PC-3 (cell line): ENCODE measurements at regions of chr12 and their contacts with region 1.

Region 1: GRCh38 chr12:96399919-96400797 is at the start of gene CDK17:
- DNase-seq: peak; percentile 77
- ATAC-seq: peak; percentile 65
- H3K4me3 ChIP-seq: peak within 1 kb of the TSS; percentile 82
- H3K27ac ChIP-seq: peak within 1 kb of the TSS; percentile 90
- H3K4me1 ChIP-seq: peaks cover 27% of the 10 kb centered on the region
- H3K27me3 ChIP-seq: no peaks in the 10 kb centered on the region
- CTCF ChIP-seq: 0 out of 2 replicates have a peak, but pooled peaks have one; percentile 16
- total RNA-seq, gene CDK17: 20.7 and 23.9 TPM in 2 replicates

Region 2: GRCh38 chr12:96219698-96220206 is 180.4 kb before region 1 on chr12:
- CTCF ChIA-PET with region 1: interaction called, 8 read pairs
- POLR2A ChIA-PET with region 1: no interaction called
- intact Hi-C with region 1: loop called (anchors 2 kb)
- DNase-seq: peak; percentile 99
- ATAC-seq: peak; percentile 98
- H3K4me3 ChIP-seq: peak overlapping the region; percentile 60
- H3K27ac ChIP-seq: peak overlapping the region; percentile 98
- H3K4me1 ChIP-seq: peaks cover 37% of the 10 kb centered on the region
- H3K27me3 ChIP-seq: no peaks in the 10 kb centered on the region
- CTCF ChIP-seq: no peak

Region 3: GRCh38 chr12:96303653-96304052 is 96.5 kb before region 1 on chr12:
- CTCF ChIA-PET with region 1: interaction called, 15 read pairs
- POLR2A ChIA-PET with region 1: no interaction called
- intact Hi-C with region 1: loop called (anchors 1 kb)
- DNase-seq: no peak
- ATAC-seq: no peak
- H3K4me3 ChIP-seq: no peak overlapping the region
- H3K27ac ChIP-seq: no peak overlapping the region
- H3K4me1 ChIP-seq: peaks cover 9% of the 10 kb centered on the region
- H3K27me3 ChIP-seq: no peaks in the 10 kb centered on the region
- CTCF ChIP-seq: no peak

Region 4: GRCh38 chr12:96347130-96347699 is 52.9 kb before region 1 on chr12:
- CTCF ChIA-PET with region 1: no interaction called
- POLR2A ChIA-PET with region 1: no interaction called
- intact Hi-C with region 1: loop called (anchors 5 kb)
- DNase-seq: no peak
- ATAC-seq: no peak
- H3K4me3 ChIP-seq: no peak overlapping the region
- H3K27ac ChIP-seq: no peak overlapping the region
- H3K4me1 ChIP-seq: no peaks in the 10 kb centered on the region
- H3K27me3 ChIP-seq: no peaks in the 10 kb centered on the region
- CTCF ChIP-seq: no peak

Region 5: DNA sequence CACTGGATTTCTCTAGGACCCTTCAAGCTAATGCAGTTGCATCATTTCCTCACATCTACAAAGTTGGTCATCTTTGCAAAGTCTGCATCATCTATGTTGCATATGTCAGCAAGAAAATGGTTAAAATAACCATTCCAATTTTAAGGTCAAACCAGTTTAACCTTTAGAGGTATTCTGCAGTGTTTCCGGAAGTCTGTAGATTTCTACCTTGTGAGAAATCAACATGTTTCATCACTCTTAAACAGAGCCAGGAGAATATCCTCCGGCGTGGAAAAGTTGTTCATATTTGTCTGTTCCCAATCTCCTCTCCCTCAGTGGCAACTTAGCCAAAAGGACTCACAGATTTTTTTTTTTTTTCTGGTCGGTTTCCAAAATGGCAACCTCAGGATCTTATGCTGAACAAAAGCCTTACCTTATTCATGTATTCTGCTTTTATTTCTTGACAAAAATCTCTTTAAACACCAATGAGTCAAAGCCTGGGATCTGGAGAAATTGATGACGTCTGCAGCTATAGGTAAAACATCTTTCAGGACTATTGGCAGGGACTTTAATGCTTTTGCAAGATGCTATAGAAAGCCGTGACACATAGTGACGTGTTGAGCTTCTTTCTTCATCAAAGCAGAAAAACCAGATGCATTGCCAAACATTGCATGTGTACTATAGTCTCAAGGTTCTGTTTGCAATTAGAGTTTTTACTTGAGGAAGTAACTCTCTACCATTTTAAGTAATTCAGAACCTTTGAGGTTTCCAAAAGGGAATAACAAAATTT is 16.1 kb after region 1 on chr12:
- CTCF ChIA-PET with region 1: no interaction called
- POLR2A ChIA-PET with region 1: no interaction called
- intact Hi-C with region 1: no loop called
- DNase-seq: peak; percentile 96
- ATAC-seq: peak; percentile 84
- H3K4me3 ChIP-seq: peak overlapping the region; percentile 21; the same call in 1 of the 2 replicates
- H3K27ac ChIP-seq: peak overlapping the region; percentile 86
- H3K4me1 ChIP-seq: peaks cover 22% of the 10 kb centered on the region
- H3K27me3 ChIP-seq: no peaks in the 10 kb centered on the region
- CTCF ChIP-seq: no peak

Region 6: DNA sequence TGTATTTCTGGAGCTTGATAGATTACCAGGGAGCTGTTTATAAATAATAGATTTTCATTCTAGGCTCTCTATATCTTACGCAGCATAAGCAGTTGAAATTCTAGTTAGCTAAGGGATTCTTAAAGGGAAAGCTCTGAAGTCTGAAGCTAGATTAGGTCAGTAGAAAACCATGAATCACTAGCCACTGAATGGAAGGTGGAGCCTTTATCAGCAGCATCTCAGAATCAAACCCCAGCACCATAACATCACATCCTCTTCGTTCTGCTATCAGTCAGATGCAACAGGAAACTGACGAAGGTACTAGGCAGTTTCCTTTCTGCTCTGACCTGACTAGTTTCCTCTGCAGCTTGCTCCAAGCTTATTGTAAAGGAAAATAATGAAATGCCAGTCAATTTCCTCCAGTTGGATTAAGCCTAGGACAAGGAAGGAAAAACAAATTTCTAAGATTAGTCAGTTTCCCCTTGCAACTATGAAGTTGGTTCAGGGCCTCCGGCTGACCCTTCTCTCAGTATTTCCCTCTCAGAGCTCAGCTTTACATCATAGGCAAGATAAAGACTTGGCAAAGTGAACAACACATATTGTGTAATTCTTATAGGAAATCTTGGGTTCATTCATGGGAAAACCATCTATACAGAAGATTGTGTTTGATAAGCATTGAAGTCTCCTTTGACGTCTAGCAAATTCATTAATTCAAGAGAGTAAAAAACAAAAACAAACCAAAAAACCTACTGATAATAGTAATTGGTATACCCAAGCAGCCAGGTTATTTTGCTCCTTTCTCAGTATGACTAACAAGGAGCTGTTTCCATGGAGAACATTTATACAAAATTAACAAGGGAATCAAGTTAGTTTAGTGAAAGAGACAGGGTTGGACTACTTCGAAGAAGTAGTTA is 45.8 kb after region 1 on chr12:
- CTCF ChIA-PET with region 1: interaction called, 5 read pairs
- POLR2A ChIA-PET with region 1: interaction called, 3 read pairs
- intact Hi-C with region 1: loop called (anchors 1 kb)
- DNase-seq: peak; percentile 90
- ATAC-seq: peak; percentile 58
- H3K4me3 ChIP-seq: peak overlapping the region; percentile 26; the same call in 1 of the 2 replicates
- H3K27ac ChIP-seq: peak overlapping the region; percentile 92
- H3K4me1 ChIP-seq: peaks cover 37% of the 10 kb centered on the region
- H3K27me3 ChIP-seq: no peaks in the 10 kb centered on the region
- CTCF ChIP-seq: no peak

Region 7: GRCh38 chr12:96489103-96490056 is 89.2 kb after region 1 on chr12 and contains the start of gene CFAP54:
- CTCF ChIA-PET with region 1: interaction called, 7 read pairs
- POLR2A ChIA-PET with region 1: no interaction called
- intact Hi-C with region 1: loop called (anchors 1 kb)
- DNase-seq: peak; percentile 97
- ATAC-seq: peak; percentile 79
- H3K4me3 ChIP-seq: peak within 1 kb of the TSS; percentile 81
- H3K27ac ChIP-seq: peak within 1 kb of the TSS; percentile 33
- H3K4me1 ChIP-seq: peaks cover 46% of the 10 kb centered on the region
- H3K27me3 ChIP-seq: no peaks in the 10 kb centered on the region
- CTCF ChIP-seq: peak; percentile 85
- total RNA-seq, gene CFAP54: 0.77 and 1.1 TPM in 2 replicates

Region 8: GRCh38 chr12:96516472-96517430 is 116.6 kb after region 1 on chr12:
- CTCF ChIA-PET with region 1: interaction called, 5 read pairs
- POLR2A ChIA-PET with region 1: no interaction called
- intact Hi-C with region 1: loop called (anchors 1 kb)
- DNase-seq: peak; percentile 91
- ATAC-seq: peak; percentile 69
- H3K4me3 ChIP-seq: peak overlapping the region; percentile 46
- H3K27ac ChIP-seq: no peak overlapping the region
- H3K4me1 ChIP-seq: peaks cover 10% of the 10 kb centered on the region; the same call in 1 of the 2 replicates
- H3K27me3 ChIP-seq: no peaks in the 10 kb centered on the region
- CTCF ChIP-seq: peak; percentile 88